H1 (cell line): ENCODE measurements at regions of chr1 and their contacts with region 1.

Region 1: DNA sequence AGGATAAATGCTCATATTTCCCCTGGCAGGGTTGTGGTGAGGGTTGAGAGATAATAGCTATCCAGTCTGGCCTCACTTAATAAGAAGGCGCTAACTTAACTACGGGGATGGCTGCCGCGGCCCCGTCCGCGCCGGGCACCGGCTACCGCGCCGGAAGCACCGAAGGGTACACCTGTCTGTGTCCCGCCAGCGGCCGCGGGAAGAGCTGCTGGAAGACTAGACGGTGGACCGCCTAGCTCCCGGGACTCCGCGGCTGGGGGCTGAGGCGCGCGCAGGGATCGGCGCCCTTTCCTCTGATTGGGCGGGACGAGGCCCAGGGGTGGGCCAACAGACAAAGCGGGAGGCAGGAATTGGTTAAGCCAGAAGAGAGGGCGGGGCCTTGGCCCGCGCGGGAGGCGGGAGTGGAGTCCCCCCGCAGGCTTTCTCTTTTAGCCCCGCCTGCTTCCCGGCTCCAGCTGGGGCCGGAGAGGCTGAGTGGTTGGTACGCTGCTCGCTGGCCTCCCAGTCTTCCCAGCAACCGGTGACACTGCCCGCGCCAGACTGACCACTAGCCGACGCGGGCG is at the start of gene ZNF672:
- DNase-seq: peak; percentile 91 to 95
- H3K4me3 ChIP-seq: peak within 1 kb of the TSS; percentile 78 to 88 (median 84)
- H3K27ac ChIP-seq: peak within 1 kb of the TSS; percentile 77
- H3K4me1 ChIP-seq: peaks cover 0 to 5% (median 2%) of the 10 kb centered on the region in 4 experiments; a peak in 3 of 7 replicates
- H3K27me3 ChIP-seq: peaks cover 0 to 2% (median 0%) of the 10 kb centered on the region in 4 experiments; a peak in 1 of 7 replicates
- CTCF ChIP-seq: no peak; a peak in 1 of 4 replicates
- EP300 ChIP-seq: no peak
- POLR2A ChIP-seq: peak; percentile 71 to 87; a peak in 2 of 3 replicates
- RAD21 ChIP-seq: no peak; a peak in 1 of 4 replicates
- total RNA-seq, gene ZNF672: 28.4 and 30.7 TPM in 2 replicates

Region 2: DNA sequence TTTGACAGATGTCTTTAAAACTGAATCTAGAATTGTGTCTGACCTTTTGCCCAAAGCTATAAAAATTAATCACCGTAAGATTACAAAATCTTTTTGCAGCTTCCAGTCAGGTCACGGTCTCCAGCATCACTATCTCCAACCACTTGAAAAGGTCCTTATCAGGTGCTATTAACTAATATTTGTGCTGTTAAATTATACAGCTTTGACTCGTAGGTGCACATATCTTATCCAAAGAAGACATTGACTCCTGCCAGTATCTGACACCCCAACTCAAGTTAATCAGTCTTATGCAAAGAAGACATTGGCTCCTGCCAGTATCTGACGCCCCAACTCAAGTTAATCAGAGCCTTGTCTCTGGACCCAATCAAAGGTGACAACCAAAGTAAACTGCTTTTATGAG is 62.4 kb before region 1 on chr1:
- CTCF ChIA-PET with region 1: no interaction called
- POLR2A ChIA-PET with region 1: no interaction called
- DNase-seq: no peak
- H3K4me3 ChIP-seq: no peak overlapping the region
- H3K27ac ChIP-seq: no peak overlapping the region
- H3K4me1 ChIP-seq: no peaks in the 10 kb centered on the region
- H3K27me3 ChIP-seq: no peaks in the 10 kb centered on the region
- CTCF ChIP-seq: no peak
- EP300 ChIP-seq: no peak
- POLR2A ChIP-seq: no peak
- RAD21 ChIP-seq: no peak

Region 3: GRCh38 chr1:248807067-248807737 is 30.7 kb before region 1 on chr1:
- CTCF ChIA-PET with region 1: interaction called, 17 read pairs
- POLR2A ChIA-PET with region 1: interaction called, 3 read pairs
- DNase-seq: peak in 1 of 2 experiments; percentile 76
- H3K4me3 ChIP-seq: no peak overlapping the region
- H3K27ac ChIP-seq: no peak overlapping the region
- H3K4me1 ChIP-seq: no peaks in the 10 kb centered on the region
- H3K27me3 ChIP-seq: no peaks in the 10 kb centered on the region
- CTCF ChIP-seq: peak; percentile 82 to 86 (median 83)
- EP300 ChIP-seq: no peak
- POLR2A ChIP-seq: no peak
- RAD21 ChIP-seq: peak; percentile 85 to 91

Region 4: DNA sequence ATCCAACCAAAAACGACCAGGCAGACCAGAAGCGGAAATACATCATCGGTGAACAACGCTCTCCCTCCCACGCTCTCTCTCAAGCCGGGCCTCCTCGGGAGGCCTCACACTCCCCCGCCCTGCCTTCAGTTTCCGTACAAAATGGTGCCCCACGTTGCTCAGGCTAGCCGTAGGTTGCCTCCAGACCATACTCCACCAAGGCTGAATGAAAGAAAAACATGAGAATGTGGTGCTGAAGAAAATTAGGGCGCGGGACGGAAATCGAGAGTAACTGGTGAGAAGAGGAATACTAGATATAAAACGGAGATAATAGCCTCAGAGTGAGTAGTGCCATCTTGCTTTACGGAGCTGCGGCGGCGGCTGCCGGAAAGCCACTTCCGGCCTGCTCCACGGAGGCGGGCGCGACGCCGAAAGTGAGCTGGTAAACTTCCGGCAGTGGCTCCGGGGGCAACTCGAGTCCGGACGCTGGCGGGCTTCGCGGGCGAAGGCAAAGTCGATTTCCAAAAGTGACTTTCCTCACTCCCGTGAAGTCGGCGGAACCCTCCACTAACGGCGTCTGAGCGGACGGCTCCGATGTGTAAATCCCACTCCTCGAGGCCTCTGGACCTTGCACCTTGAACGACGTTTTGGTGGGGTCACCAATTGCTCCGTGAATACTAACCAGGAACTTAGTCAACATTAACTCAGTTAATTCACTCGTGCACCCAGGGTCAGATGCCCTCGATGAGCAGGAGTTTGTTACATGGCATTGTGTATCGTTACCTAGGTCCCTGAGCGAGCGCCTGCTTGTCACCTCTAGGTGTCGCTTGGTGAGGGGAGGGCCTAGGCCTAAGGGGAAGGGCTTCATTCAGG is 11.7 kb before region 1 on chr1 and contains the start of gene SH3BP5L:
- CTCF ChIA-PET with region 1: interaction called, 20 read pairs
- POLR2A ChIA-PET with region 1: interaction called, 69 read pairs
- DNase-seq: peak; percentile 74 to 87
- H3K4me3 ChIP-seq: peak within 1 kb of the TSS; percentile 88 to 98 (median 94)
- H3K27ac ChIP-seq: peak within 1 kb of the TSS; percentile 98
- H3K4me1 ChIP-seq: peaks cover 0 to 5% (median 1%) of the 10 kb centered on the region in 4 experiments; a peak in 5 of 7 replicates
- H3K27me3 ChIP-seq: no peaks in the 10 kb centered on the region
- CTCF ChIP-seq: peak; percentile 42 to 71 (median 60)
- EP300 ChIP-seq: no peak
- POLR2A ChIP-seq: peak in 1 of 2 experiments; percentile 91; a peak in 2 of 3 replicates
- RAD21 ChIP-seq: peak; percentile 27 to 51; a peak in 3 of 4 replicates
- total RNA-seq, gene SH3BP5L: 27.9 and 28.4 TPM in 2 replicates

Region 5: GRCh38 chr1:248858891-248859889 is 21.3 kb after region 1 on chr1 and contains the start of gene ZNF692:
- CTCF ChIA-PET with region 1: interaction called, 58 read pairs
- POLR2A ChIA-PET with region 1: interaction called, 40 read pairs
- DNase-seq: peak; percentile 88 to 96
- H3K4me3 ChIP-seq: peak within 1 kb of the TSS; percentile 76 to 93 (median 84)
- H3K27ac ChIP-seq: peak within 1 kb of the TSS; percentile 75
- H3K4me1 ChIP-seq: peaks cover 3 to 18% (median 14%) of the 10 kb centered on the region in 4 experiments
- H3K27me3 ChIP-seq: peaks cover 0 to 15% (median 8%) of the 10 kb centered on the region in 4 experiments; a peak in 5 of 7 replicates
- CTCF ChIP-seq: no peak
- EP300 ChIP-seq: no peak
- POLR2A ChIP-seq: peak; percentile 3 to 60; a peak in 2 of 3 replicates
- RAD21 ChIP-seq: no peak
- total RNA-seq, gene ZNF692: 38.4 and 39.7 TPM in 2 replicates

Region 6: DNA sequence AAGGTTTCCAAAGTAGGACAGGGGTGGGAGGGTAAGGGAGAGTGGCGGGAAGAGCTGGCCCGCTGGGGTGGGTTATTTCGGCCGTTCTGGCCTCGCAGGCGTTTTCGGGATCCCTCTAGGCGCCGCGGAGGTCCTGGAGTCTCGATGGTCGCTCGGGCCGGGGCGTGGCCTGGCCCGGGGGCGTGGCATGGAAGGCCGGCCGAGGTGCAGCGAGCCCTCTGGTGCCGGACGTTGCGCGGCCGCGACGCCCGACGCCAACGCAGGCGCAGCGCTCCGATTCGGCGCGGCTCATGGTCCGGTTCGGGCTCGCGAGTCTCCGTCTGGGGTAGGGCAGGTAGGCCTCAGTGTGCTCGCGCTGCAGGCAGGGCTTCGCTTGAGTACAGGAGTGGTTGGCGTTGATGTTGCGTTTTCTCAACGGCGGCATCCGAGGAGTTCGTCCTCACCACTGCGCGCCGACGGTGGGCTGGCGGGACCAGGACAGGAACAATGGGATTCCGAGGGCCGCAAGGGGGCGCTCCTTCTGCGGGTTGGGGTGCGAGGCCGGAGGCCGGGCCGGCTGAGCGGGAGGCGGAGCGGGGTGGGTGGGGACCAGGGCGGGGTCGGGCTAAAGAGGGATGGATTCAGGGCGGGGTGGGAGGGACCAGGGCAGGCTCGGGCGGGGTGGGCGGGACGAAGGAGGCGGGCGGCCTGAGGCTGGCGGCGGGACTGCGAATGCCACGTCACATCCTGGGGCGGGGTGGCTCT is 68.3 kb after region 1 on chr1 and contains the start of gene PGBD2:
- CTCF ChIA-PET with region 1: interaction called, 15 read pairs
- POLR2A ChIA-PET with region 1: interaction called, 4 read pairs
- DNase-seq: peak; percentile 81 to 99
- H3K4me3 ChIP-seq: peak within 1 kb of the TSS; percentile 52 to 82 (median 76)
- H3K27ac ChIP-seq: peak within 1 kb of the TSS; percentile 99
- H3K4me1 ChIP-seq: peaks cover 0 to 8% (median 3%) of the 10 kb centered on the region in 4 experiments; a peak in 3 of 7 replicates
- H3K27me3 ChIP-seq: no peaks in the 10 kb centered on the region
- CTCF ChIP-seq: peak; percentile 74 to 88 (median 75)
- EP300 ChIP-seq: peak; percentile 9 to 59; a peak in 2 of 3 replicates
- POLR2A ChIP-seq: peak; percentile 94 to 98
- RAD21 ChIP-seq: peak; percentile 52 to 58; a peak in 3 of 4 replicates
- total RNA-seq, gene PGBD2: 7.7 and 7.8 TPM in 2 replicates